ENCODE measurements at regions of chr1 and their contacts with region 1.

Region 1: DNA sequence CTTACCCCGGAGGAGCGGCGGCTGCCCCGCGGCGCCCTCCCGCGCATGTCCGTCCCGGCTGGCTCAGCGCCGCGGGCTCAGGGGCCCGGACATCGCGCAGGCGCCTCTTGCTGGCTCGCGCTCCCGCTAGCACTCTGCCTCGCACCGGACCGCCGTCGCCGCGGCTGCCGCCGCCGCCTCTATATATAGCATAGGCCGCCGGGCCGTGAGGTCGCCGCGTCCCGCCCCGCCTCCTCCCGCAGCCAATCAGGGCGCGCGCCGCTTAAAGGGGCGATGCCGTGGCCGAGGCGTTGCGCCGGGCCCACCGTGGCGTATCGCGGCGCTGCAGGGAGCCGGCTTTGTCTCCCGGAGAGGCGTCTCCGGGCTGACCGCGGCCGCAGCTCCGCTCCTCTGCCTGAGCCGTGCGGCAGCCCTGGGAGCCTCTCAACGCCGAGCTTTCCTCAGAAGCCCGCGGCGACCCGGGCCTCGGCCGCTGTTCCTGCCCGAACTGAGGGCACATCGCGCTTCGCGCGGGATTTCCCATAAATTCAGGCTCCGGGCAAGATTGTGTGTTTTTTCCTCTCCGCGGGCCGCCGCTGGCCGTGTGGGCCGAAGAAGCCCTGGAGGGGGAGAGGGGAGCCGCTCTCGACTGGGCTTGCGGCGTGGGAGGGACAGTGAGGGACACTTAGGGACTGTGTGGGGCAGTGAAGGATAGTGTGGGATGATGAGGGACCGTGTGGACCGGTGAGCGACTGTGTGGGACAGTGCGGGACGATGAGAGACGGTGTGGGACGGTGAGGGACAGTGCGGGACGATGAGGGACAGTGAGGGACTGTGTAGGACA is at the start of gene ERRFI1:
- DNase-seq: peak; percentile 96 to 99 (median 99)
- ATAC-seq: peak; percentile 97 to 98
- H3K4me3 ChIP-seq: peak within 1 kb of the TSS; percentile 88
- H3K27ac ChIP-seq: peak within 1 kb of the TSS; percentile 87
- H3K4me1 ChIP-seq: peaks cover 2% of the 10 kb centered on the region
- H3K27me3 ChIP-seq: no peaks in the 10 kb centered on the region
- total RNA-seq, gene ERRFI1: 9.8 to 16.9 (median 15.0) TPM

Region 2: GRCh38 chr1:8077120-8077573 is 50.8 kb after region 1 on chr1:
- intact Hi-C with region 1: no loop called
- DNase-seq: peak; percentile 61 to 79 (median 78)
- ATAC-seq: peak; percentile 94 to 97
- H3K4me3 ChIP-seq: no peak overlapping the region
- H3K27ac ChIP-seq: peak overlapping the region; percentile 42
- H3K4me1 ChIP-seq: peaks cover 3% of the 10 kb centered on the region
- H3K27me3 ChIP-seq: no peaks in the 10 kb centered on the region

Region 3: GRCh38 chr1:8113262-8114220 is 87.2 kb after region 1 on chr1:
- intact Hi-C with region 1: no loop called
- DNase-seq: peak in 1 of 3 donors; percentile 39
- ATAC-seq: peak in 1 of 2 donors; percentile 47
- H3K4me3 ChIP-seq: no peak overlapping the region
- H3K27ac ChIP-seq: no peak overlapping the region
- H3K4me1 ChIP-seq: peaks cover 12% of the 10 kb centered on the region
- H3K27me3 ChIP-seq: no peaks in the 10 kb centered on the region

Region 4: DNA sequence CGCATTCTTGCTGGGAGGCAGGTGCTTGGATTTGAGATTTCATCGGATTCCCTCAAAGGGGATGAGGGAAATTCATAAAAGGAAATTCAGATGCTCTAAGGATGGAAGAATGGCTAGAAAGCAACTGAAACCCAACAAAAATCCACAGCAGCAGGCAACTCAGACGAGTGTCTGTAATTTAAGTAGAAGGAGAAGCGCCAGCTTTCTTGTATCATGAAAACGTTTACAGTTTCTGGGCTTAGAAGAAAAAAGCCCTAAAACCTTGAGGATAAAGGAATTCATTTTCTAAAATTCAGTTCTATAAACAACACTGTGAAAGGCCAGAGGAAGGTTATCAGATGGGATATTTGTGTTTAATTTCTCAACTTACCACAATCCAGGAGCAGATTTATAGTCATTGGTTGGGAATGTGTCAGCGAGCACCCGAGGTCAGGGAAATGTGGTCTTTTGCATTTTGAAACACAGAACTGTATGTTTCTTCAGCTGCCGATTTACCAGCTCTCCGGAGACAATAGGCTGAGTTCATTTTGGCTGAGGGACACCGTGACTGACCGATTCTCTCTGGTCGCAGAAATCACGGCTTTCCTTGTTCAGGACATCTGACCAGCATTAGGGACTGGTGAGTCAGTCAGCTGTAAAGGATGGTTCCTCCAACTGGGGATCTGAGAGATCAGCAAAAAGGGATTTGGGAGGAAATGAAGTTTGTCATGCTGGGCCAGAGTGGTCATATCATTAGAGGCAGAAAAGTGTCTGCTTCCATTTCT is 111.3 kb after region 1 on chr1:
- intact Hi-C with region 1: no loop called
- DNase-seq: no peak
- ATAC-seq: peak; percentile 32 to 57
- H3K4me3 ChIP-seq: no peak overlapping the region
- H3K27ac ChIP-seq: peak overlapping the region; percentile 20
- H3K4me1 ChIP-seq: peaks cover 6% of the 10 kb centered on the region
- H3K27me3 ChIP-seq: no peaks in the 10 kb centered on the region

Region 5: DNA sequence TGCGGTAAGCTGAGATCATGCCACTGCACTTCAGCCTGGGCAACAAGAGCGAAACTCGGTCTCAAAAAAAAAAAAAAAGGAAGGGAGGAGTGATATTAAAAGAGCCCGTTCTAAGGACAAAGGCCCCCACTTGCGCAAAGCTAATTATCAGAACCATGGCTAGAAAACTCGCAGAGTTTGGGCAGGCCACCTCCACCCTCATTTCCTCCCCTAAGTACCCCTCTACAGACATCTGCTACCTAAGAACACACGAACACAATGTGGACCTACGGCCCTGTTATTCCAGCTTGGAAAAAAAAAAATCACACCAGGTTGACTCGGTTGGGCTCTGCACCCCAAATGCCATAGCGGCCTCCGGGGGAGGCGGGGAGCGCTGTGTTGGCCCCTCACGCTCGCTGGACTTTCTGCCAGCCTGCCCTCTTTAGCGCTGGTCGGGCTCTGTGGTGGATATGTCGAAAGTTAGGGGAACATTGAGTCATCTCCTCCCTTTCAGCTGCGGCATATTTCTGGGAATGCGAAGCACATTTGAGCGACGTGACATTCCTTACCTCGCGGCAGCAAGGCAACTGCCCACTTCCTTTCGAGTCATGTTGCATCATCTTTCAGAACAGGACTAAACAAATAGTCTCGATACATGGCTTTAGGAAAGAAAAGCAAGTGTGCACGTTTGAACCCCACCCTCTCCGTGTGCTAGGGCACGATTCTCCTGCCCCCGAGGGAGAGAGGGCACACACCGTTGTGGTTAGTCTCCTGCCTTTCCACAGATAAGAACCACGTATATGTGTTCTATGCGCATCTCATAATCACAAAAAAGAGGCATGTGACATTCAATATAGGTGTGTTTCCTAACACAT is 185.5 kb after region 1 on chr1:
- intact Hi-C with region 1: loop called in 1 of 4 experiments (anchors 10 kb)
- DNase-seq: peak in 2 of 3 donors; percentile 54 to 74
- ATAC-seq: peak; percentile 68 to 81
- H3K4me3 ChIP-seq: no peak overlapping the region
- H3K27ac ChIP-seq: no peak overlapping the region
- H3K4me1 ChIP-seq: no peaks in the 10 kb centered on the region
- H3K27me3 ChIP-seq: no peaks in the 10 kb centered on the region

Region 6: GRCh38 chr1:8238851-8239305 is 212.5 kb after region 1 on chr1:
- intact Hi-C with region 1: loop called in 1 of 4 experiments (anchors 5 kb)
- DNase-seq: peak in 2 of 3 donors; percentile 36 to 69
- ATAC-seq: peak; percentile 82 to 85
- H3K4me3 ChIP-seq: no peak overlapping the region
- H3K27ac ChIP-seq: no peak overlapping the region
- H3K4me1 ChIP-seq: peaks cover 2% of the 10 kb centered on the region
- H3K27me3 ChIP-seq: no peaks in the 10 kb centered on the region